ENCODE measurements at regions of chr12 and their contacts with region 1.

Region 1: GRCh38 chr12:101323255-101323654 is 43.4 kb downstream of the UTP20 start:
- DNase-seq: no peak
- H3K4me3 ChIP-seq: no peak overlapping the region
- H3K27ac ChIP-seq: no peak overlapping the region
- H3K4me1 ChIP-seq: no peaks in the 10 kb centered on the region
- CTCF ChIP-seq: no peak

Region 2: DNA sequence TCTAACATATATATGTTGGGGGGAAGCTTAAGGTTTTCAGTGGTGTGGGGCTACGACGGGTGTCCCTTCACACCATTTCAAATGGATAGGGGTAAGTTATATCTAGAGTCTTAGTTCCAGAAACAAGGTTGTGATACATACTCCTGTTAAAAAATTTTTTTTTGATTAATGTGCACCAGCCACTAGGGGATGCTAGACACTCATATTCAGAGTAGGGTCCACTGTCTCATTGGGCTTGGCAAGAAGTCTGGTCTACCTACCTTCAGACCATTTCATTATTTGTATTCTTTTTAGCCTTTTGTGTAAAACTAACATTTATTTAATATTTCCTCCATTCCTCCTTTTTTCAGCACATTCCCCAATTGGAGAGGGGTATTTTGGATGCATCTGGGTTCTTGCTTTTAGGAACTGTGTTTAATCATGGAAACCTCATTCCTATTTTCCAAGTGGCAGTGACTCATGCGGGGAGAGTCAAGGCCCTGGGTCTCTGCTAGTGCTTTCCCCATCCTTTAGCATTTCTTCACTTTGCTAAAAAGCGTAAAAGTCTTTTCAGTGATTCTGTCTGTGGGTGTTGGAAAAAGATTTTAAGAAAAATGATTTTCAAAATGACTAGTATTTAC is 495.2 kb before region 1 on chr12:
- CTCF ChIA-PET with region 1: no interaction called
- POLR2A ChIA-PET with region 1: no interaction called
- intact Hi-C with region 1: loop called (anchors 10 kb)
- DNase-seq: peak; percentile 35
- H3K4me3 ChIP-seq: no peak overlapping the region
- H3K27ac ChIP-seq: no peak overlapping the region
- H3K4me1 ChIP-seq: no peaks in the 10 kb centered on the region
- CTCF ChIP-seq: peak; percentile 84

Region 3: GRCh38 chr12:101356794-101357193 is 33.5 kb after region 1 on chr12:
- CTCF ChIA-PET with region 1: no interaction called
- POLR2A ChIA-PET with region 1: no interaction called
- intact Hi-C with region 1: no loop called
- DNase-seq: no peak
- H3K4me3 ChIP-seq: no peak overlapping the region
- H3K27ac ChIP-seq: no peak overlapping the region
- H3K4me1 ChIP-seq: no peaks in the 10 kb centered on the region
- CTCF ChIP-seq: no peak

Measured in OCI-LY7 (cell line).